H1 (cell line): ENCODE measurements at regions of chr6 and their contacts with region 1.

Region 1: DNA sequence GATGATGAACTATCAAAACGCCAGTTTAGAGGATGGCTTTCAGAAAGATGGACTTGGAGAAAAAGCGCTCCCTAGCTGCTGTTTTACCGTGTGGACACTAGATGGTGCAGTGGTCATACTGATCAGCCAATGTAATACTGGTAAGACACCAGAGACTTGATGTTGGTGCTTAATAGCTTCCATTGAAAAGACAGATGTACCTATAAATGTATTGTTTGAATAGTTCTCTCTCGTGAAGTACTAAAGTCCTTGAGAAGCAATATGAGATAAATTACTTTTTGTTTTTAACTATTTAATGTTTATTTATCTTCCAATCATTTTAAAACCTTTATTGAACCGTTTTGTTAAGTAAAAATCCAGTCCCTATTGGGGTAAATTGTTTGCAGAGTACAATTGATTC is 63.9 kb upstream of the FUCA2 start:
- DNase-seq: no peak
- H3K4me3 ChIP-seq: no peak overlapping the region
- H3K27ac ChIP-seq: no peak overlapping the region
- H3K4me1 ChIP-seq: peaks cover 0 to 2% (median 0%) of the 10 kb centered on the region in 4 experiments; a peak in 1 of 7 replicates
- H3K27me3 ChIP-seq: no peaks in the 10 kb centered on the region
- CTCF ChIP-seq: peak in 2 of 3 experiments; percentile 82 to 85; a peak in 3 of 4 replicates
- EP300 ChIP-seq: no peak
- POLR2A ChIP-seq: no peak
- RAD21 ChIP-seq: peak; percentile 94 to 97

Region 2: DNA sequence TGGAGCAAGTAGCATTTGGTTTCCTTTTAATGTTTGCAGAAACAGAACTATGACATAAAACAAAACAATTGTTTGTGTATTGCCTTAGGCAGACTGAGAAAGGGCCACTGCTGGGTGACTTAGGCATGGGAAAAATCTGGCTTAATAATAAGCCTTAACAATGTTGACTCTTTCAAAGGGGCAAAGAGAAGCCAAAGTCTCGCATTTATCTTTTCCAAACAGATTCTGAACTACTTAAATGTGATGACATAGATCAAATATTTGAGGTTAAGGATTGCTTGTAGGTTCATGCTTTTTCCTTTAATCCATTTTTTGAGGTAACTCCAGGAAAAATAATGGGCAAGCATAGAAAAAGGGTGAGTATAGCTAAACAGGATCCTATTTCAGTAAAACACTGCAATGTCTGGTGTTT is 164.6 kb before region 1 on chr6:
- CTCF ChIA-PET with region 1: no interaction called
- POLR2A ChIA-PET with region 1: no interaction called
- DNase-seq: no peak
- H3K4me3 ChIP-seq: no peak overlapping the region
- H3K27ac ChIP-seq: no peak overlapping the region
- H3K4me1 ChIP-seq: no peaks in the 10 kb centered on the region; a peak in 1 of 7 replicates
- H3K27me3 ChIP-seq: no peaks in the 10 kb centered on the region
- CTCF ChIP-seq: no peak
- EP300 ChIP-seq: no peak
- POLR2A ChIP-seq: no peak
- RAD21 ChIP-seq: no peak

Region 3: GRCh38 chr6:143586557-143586956 is 11.1 kb after region 1 on chr6:
- CTCF ChIA-PET with region 1: interaction called, 13 read pairs
- POLR2A ChIA-PET with region 1: interaction called, 3 read pairs
- DNase-seq: no peak
- H3K4me3 ChIP-seq: no peak overlapping the region
- H3K27ac ChIP-seq: no peak overlapping the region
- H3K4me1 ChIP-seq: no peaks in the 10 kb centered on the region
- H3K27me3 ChIP-seq: no peaks in the 10 kb centered on the region
- CTCF ChIP-seq: no peak
- EP300 ChIP-seq: no peak
- POLR2A ChIP-seq: no peak
- RAD21 ChIP-seq: no peak

Region 4: DNA sequence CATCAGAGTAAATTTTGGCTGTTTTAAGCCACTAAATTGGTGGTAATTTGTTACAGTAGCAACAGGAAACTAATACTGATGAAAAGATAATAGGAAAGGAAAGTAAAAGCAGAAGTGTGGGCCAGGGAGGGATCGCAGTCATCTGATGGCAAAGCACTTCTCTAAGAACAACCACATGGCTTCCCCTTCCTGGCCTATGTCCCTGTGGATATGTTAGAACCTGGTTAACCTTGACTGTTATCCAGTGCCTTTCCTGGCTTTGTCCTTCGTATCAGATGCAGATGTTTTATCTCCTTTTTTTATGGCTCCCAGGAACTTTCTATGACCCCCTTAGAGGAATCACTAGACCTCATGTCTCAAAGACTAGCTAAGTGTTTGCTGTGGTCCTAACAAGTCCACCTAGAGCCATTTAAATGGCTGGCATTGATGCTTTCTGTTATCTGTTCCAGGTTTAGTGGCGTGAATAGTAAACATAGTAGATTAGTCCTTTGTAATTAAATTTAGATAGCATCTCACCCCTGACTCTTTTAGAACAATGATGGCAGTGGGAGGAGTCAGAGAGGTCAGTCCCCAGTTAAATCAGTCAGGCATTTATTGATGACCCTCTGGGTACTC is 23.1 kb after region 1 on chr6:
- CTCF ChIA-PET with region 1: interaction called, 13 read pairs
- POLR2A ChIA-PET with region 1: no interaction called
- DNase-seq: no peak
- H3K4me3 ChIP-seq: no peak overlapping the region
- H3K27ac ChIP-seq: no peak overlapping the region
- H3K4me1 ChIP-seq: peaks cover 0 to 5% (median 1%) of the 10 kb centered on the region in 4 experiments; a peak in 3 of 7 replicates
- H3K27me3 ChIP-seq: no peaks in the 10 kb centered on the region
- CTCF ChIP-seq: no peak
- EP300 ChIP-seq: no peak
- POLR2A ChIP-seq: no peak
- RAD21 ChIP-seq: no peak

Region 5: DNA sequence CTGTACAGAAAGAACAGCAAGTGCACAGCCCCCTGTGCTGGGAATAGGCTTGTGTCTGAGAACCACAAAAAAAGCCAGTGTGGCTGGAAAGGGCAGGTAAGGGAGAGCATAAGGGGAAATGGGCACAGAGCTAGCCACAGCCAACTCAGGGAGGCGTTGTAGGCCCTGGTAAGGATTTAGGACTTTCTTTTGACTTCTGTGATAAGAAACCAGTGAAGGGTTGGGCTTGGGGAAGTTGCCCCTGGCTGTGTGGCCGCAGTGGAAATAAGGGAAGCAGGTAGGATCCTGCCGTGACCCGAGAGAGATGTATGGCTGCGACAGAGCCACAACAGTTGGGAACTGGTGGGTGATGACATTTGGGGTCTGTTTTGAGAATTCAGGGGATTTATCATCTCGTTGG is 72.3 kb after region 1 on chr6:
- CTCF ChIA-PET with region 1: no interaction called
- POLR2A ChIA-PET with region 1: no interaction called
- DNase-seq: no peak
- H3K4me3 ChIP-seq: no peak overlapping the region
- H3K27ac ChIP-seq: no peak overlapping the region
- H3K4me1 ChIP-seq: peaks cover 0 to 4% (median 3%) of the 10 kb centered on the region in 4 experiments; a peak in 4 of 7 replicates
- H3K27me3 ChIP-seq: no peaks in the 10 kb centered on the region
- CTCF ChIP-seq: peak in 2 of 3 experiments; percentile 18 to 34; a peak in 2 of 4 replicates
- EP300 ChIP-seq: no peak
- POLR2A ChIP-seq: no peak
- RAD21 ChIP-seq: peak; percentile 57 to 64

Region 6: GRCh38 chr6:143842902-143843676 is 267.6 kb after region 1 on chr6 and contains the start of gene LTV1:
- CTCF ChIA-PET with region 1: interaction called, 22 read pairs
- POLR2A ChIA-PET with region 1: interaction called, 7 read pairs
- DNase-seq: peak; percentile 88 to 96
- H3K4me3 ChIP-seq: peak within 1 kb of the TSS; percentile 80 to 97 (median 96)
- H3K27ac ChIP-seq: peak within 1 kb of the TSS; percentile 87
- H3K4me1 ChIP-seq: 0 out of 7 replicates have a peak, but pooled peaks cover 0 to 2% (median 0%) of the 10 kb centered on the region in 4 experiments
- H3K27me3 ChIP-seq: no peaks in the 10 kb centered on the region; a peak in 1 of 7 replicates
- CTCF ChIP-seq: no peak
- EP300 ChIP-seq: no peak; a peak in 1 of 3 replicates
- POLR2A ChIP-seq: peak in 1 of 2 experiments; percentile 90; a peak in 2 of 3 replicates
- RAD21 ChIP-seq: no peak; a peak in 1 of 4 replicates
- total RNA-seq, gene LTV1: 43.1 and 46.9 TPM in 2 replicates

Region 7: DNA sequence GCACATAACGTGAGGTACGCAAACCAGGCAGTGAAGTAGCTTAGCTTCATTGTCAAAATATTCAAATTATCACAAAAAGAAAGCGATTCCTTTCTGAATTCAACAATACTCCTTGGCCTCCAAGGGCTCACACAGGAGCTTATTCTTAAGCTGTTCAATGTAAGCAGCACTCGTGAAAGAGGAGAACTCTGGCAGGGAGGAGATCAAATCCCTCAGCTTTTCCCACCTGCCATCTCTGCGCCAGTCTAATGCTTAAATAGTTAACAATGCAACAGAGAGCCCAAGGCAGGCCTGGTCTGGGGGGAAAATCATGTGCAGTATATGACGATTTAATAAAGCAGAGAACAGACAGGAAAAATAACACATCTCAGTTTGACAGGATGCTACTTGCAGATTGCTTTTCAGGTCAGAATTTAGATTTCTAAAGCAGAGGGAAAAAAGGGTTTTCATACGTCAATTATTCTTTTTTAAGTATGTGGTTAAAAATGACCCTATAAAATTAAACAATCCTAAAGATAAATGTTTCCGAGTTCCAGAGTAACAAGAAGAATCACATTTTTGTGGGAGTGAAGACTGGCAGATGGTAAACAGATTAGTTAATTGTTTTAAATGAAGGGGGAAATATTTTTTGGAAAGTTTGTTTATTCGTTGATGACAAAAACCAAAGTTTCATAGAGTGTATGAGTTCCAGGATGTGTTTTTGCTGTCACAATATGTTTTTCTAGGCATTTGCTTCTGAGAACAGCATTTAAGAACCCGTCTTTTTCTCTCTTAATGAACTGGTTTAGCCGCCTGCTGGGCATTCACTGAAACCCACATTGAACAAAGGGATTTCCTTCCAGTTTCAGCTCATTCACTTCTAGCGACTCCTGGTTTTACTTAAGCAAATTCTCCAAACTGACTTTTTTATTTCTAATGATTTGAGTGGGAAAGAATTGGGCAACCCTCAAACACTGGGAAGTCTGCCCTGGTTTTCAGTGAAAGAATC is 386.7 kb after region 1 on chr6:
- CTCF ChIA-PET with region 1: interaction called, 10 read pairs
- POLR2A ChIA-PET with region 1: no interaction called
- DNase-seq: no peak
- H3K4me3 ChIP-seq: peak overlapping the region in 1 of 4 experiments; percentile 33; a peak in 3 of 8 replicates
- H3K27ac ChIP-seq: no peak overlapping the region
- H3K4me1 ChIP-seq: peaks cover 21 to 72% (median 47%) of the 10 kb centered on the region in 4 experiments
- H3K27me3 ChIP-seq: peaks cover 67 to 98% (median 89%) of the 10 kb centered on the region in 4 experiments
- CTCF ChIP-seq: peak in 2 of 3 experiments; percentile 41 to 49; a peak in 3 of 4 replicates
- EP300 ChIP-seq: no peak
- POLR2A ChIP-seq: no peak
- RAD21 ChIP-seq: peak in 1 of 2 experiments; percentile 43; a peak in 2 of 4 replicates